AG04449 (cell line): ENCODE measurements at regions of chr19 and their contacts with region 1.

Region 1: GRCh38 chr19:3125900-3126524 is 9.8 kb upstream of the GNA15 start:
- DNase-seq: no peak
- H3K4me3 ChIP-seq: no peak overlapping the region
- CTCF ChIP-seq: peak; percentile 62

Region 2: DNA sequence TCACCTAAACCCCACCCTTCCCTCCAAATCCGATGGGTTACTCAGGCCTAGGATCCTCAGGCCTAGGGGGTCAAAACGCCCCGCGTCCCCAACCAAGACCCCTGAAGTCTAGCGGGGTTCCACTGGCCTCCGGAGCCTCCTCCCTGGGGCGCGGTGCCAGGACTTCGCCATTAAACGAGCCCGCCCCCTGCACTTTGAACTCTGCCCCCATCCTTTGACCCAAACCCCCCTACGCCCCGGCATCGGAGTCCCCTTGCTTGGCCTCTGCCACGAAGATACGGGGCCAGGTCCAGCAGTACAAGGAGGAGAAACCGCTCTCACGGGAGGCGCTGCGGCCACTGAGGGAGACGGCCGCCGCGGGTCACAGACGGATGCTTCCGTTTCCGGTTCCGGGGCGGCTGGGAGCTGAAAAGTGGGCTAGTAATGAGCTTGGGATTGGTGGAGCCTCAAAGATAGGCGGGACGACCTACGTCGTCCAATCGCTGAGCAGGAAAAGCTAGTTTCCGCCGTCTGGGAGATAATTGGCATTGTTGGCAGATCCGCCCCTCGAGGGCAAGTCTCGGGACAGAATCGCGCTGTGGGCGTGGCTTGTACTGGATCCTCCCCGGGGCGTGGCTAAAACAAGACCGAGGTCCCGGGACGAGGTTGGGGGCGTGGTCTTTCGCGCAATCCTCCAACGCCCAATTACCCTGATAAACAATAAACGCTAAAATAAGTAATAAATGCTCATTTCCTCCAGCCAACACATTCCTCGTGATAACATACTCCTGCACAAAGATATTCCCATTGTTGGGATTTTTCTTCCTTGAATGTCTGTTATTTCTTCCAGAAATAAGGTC is 175.5 kb before region 1 on chr19:
- CTCF ChIA-PET with region 1: interaction called, 58 read pairs
- POLR2A ChIA-PET with region 1: interaction called, 4 read pairs
- DNase-seq: peak; percentile 95
- H3K4me3 ChIP-seq: peak overlapping the region; percentile 94
- CTCF ChIP-seq: no peak

Region 3: DNA sequence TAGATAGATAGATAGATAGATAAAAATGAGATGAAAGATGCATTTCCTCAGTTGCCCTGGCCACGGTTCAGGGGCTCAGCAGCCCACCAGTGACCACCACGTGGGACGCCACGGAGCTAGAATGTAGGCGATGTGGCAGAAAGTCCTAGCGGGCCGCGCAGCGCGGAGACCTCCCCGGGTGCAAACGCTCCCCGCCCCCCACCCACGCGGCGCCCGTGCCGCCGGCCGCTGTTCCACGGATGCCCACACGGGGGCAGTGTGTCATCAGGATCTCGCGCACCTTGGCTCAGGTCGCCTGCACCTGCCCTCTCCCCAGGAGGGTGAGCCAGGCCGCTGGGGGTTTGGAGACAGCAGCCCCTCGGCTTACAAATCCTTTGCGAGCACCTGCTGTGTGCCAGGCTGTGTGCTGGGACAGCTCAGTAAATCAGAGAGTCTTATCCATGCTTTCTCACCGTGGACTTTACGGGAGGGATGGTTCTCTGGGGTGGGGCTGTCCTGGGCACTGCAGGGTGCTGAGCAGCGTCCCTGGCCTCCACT is 50.0 kb before region 1 on chr19:
- CTCF ChIA-PET with region 1: interaction called, 17 read pairs
- POLR2A ChIA-PET with region 1: no interaction called
- DNase-seq: no peak
- H3K4me3 ChIP-seq: peak overlapping the region; percentile 42
- CTCF ChIP-seq: peak; percentile 93

Region 4: GRCh38 chr19:3151563-3152430 is 25.8 kb after region 1 on chr19:
- CTCF ChIA-PET with region 1: interaction called, 282 read pairs
- POLR2A ChIA-PET with region 1: no interaction called
- DNase-seq: no peak
- H3K4me3 ChIP-seq: no peak overlapping the region
- CTCF ChIP-seq: no peak

Region 5: GRCh38 chr19:3185482-3186376 is 59.7 kb after region 1 on chr19 and contains the start of gene NCLN:
- CTCF ChIA-PET with region 1: interaction called, 16 read pairs
- POLR2A ChIA-PET with region 1: no interaction called
- DNase-seq: peak; percentile 53
- H3K4me3 ChIP-seq: peak within 1 kb of the TSS; percentile 86
- CTCF ChIP-seq: no peak

Region 6: GRCh38 chr19:3220576-3220975 is 94.6 kb after region 1 on chr19:
- CTCF ChIA-PET with region 1: no interaction called
- POLR2A ChIA-PET with region 1: no interaction called
- DNase-seq: no peak
- H3K4me3 ChIP-seq: no peak overlapping the region
- CTCF ChIP-seq: no peak

Region 7: DNA sequence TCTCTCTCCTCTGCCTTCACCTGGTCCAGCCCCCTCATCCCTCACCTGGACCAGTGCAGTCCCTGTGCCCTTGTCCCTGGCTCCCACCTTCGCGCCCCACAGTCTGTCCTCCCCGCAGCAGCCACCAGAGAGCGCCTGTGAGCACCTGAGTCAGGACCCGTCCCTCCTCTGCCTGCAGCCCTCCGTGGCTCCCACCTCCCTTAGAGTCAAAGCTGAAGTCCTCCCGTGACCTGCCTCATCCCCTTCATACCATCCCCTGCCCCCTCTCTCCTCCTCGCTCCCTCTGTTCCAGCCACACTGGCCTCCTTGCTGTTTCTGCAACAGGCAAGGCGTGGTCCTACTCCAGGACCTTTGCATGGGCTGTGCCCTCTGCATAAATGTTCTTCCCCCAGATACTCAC is 108.8 kb after region 1 on chr19:
- CTCF ChIA-PET with region 1: no interaction called
- POLR2A ChIA-PET with region 1: no interaction called
- DNase-seq: no peak
- H3K4me3 ChIP-seq: no peak overlapping the region
- CTCF ChIP-seq: no peak